Common myeloid progenitor, CD34-positive (primary cell): ENCODE measurements at regions of chr9 and their contacts with region 1.

Region 1: DNA sequence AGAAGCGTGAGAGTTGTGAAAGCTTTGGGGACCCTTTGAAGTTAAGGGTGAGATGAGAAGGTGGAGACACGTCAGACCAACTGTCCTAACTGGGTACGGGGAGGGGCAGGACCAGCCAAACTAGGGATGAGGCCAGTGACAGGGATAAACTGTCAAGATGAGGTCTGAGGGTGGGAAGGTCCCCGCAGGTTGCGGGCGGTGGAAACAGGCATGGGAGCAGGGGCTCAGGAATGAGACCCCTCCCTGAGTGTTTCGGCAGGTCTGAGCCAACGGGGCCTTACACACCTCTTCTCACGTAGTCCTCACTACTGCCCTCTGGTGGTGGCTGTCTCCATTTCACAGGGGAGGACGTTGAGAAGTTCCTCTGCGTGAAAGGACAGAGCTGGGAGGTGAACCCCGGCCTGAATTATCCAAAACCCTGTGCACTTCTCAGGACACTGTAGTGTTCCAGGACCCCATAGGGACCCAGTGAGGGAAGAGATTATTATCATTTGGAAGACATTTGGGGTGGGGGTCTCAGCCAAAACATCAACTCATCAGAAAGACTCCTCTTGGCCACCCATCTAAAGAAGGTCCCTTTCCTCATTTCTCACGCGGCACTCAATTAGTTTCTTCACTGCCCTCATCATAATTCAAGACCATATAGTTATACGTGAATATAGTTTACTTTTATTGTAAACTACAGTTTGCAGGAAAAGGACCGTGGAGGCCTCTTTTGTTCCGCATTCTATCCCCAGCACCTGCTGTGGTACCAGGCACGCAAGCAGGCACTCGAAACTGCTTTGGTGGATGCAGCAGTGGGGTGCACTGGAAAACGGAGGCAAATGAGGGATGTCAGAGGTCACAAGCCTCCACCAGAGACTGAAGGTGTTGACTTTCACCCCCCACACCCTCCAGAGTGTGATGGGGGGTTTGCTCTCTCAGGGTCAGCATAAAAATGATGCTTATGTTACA is 21.7 kb upstream of the NANS start:
- DNase-seq: peak; percentile 86 to 92 (median 86)
- H3K4me3 ChIP-seq: peak overlapping the region in 4 of 7 experiments; percentile 2 to 70 (median 30)
- H3K27ac ChIP-seq: no peak overlapping the region
- H3K4me1 ChIP-seq: peaks cover 3 to 15% (median 12%) of the 10 kb centered on the region in 4 experiments
- H3K27me3 ChIP-seq: no peaks in the 10 kb centered on the region

Region 2: GRCh38 chr9:98010445-98010844 is 24.4 kb before region 1 on chr9:
- CTCF ChIA-PET with region 1: interaction called, 93 read pairs
- POLR2A ChIA-PET with region 1: no interaction called
- DNase-seq: peak; percentile 36 to 80 (median 68)
- H3K4me3 ChIP-seq: peak overlapping the region in 2 of 7 experiments; percentile 0 to 2
- H3K27ac ChIP-seq: no peak overlapping the region
- H3K4me1 ChIP-seq: peaks cover 0 to 22% (median 10%) of the 10 kb centered on the region in 4 experiments
- H3K27me3 ChIP-seq: no peaks in the 10 kb centered on the region

Region 3: DNA sequence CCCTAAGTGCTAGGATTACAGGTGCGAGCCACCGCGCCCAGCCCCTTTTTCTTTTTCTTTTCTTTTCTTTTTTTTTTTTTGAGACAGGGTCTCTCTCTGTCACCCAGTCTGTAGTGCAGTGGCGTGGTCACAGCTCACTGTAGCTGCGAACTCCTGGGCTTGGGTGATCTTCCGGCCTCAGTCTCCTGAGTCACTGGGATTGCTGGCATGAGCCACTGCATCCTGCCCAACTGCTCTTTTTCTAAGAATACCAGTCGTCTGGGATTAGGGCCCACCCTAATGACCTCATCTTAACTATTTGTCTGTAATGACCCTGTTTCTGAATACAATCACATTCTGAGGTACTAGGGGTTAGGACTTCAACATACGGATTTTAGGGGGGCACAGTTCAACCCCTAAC is 12.4 kb before region 1 on chr9:
- CTCF ChIA-PET with region 1: interaction called, 93 read pairs
- POLR2A ChIA-PET with region 1: interaction called, 4 read pairs
- DNase-seq: no peak
- H3K4me3 ChIP-seq: no peak overlapping the region
- H3K27ac ChIP-seq: no peak overlapping the region
- H3K4me1 ChIP-seq: peaks cover 0 to 5% (median 0%) of the 10 kb centered on the region in 4 experiments
- H3K27me3 ChIP-seq: no peaks in the 10 kb centered on the region

Region 4: GRCh38 chr9:98045234-98046179 is 10.6 kb after region 1 on chr9:
- CTCF ChIA-PET with region 1: interaction called, 24 read pairs
- POLR2A ChIA-PET with region 1: no interaction called
- DNase-seq: peak; percentile 88 to 96 (median 94)
- H3K4me3 ChIP-seq: peak overlapping the region in 6 of 7 experiments; percentile 51 to 79 (median 70)
- H3K27ac ChIP-seq: peak overlapping the region; percentile 47 to 71
- H3K4me1 ChIP-seq: peaks cover 19 to 60% (median 52%) of the 10 kb centered on the region in 4 experiments
- H3K27me3 ChIP-seq: no peaks in the 10 kb centered on the region